HCT116 (cell line): ENCODE measurements at regions of chr21 and their contacts with region 1.

Region 1: DNA sequence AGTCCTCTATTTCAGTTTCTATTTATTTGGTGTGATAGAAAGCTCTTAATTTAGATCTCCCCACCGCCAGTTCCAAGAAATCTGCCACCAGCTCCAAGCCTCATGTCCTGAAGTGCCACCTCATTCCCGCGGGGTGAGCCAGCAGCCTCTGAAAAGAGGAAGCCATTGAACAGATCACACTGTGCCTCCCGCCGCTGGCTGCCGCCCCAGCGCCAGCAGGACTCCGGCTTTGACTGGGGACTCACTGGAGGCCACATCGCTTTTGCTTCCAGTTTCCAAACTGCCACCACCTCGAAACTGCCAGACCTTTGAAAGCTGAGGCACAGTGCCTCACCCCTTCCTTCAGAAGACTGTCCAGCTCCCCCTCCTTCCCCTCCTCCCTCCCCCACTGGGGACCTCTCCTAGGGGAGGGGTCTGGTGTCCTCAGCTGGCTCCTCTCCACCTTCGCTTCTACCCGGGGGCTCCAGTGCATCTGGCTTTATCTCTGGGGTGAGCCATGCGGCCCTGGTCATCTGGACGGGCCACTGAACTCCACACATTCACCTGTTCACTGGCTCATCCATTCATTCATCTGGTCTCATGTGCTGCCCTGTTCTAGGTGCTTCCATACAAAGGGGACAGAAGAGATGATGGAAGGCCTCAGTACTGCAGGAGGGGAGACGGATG is 58.9 kb downstream of the VPS26C start:
- DNase-seq: no peak
- ATAC-seq: peak; percentile 66
- H3K4me3 ChIP-seq: no peak overlapping the region
- H3K27ac ChIP-seq: peak overlapping the region; percentile 69
- H3K4me1 ChIP-seq: peaks cover 19 to 24% of the 10 kb centered on the region in 2 experiments
- H3K27me3 ChIP-seq: no peaks in the 10 kb centered on the region
- CTCF ChIP-seq: no peak
- POLR2A ChIP-seq: no peak
- RAD21 ChIP-seq: no peak

Region 2: GRCh38 chr21:37145635-37146111 is 62.5 kb before region 1 on chr21:
- CTCF ChIA-PET with region 1: no interaction called
- POLR2A ChIA-PET with region 1: no interaction called
- RAD21 ChIA-PET with region 1: no interaction called
- intact Hi-C with region 1: loop called (anchors 10 kb)
- DNase-seq: peak; percentile 19
- ATAC-seq: peak; percentile 86
- H3K4me3 ChIP-seq: no peak overlapping the region
- H3K27ac ChIP-seq: no peak overlapping the region
- H3K4me1 ChIP-seq: peaks cover 5 to 16% of the 10 kb centered on the region in 2 experiments; a peak in 3 of 4 replicates
- H3K27me3 ChIP-seq: no peaks in the 10 kb centered on the region
- CTCF ChIP-seq: no peak
- POLR2A ChIP-seq: no peak
- RAD21 ChIP-seq: no peak